Prostate gland (tissue), 2 donors: ENCODE measurements at regions of chr3 and their contacts with region 1.

Region 1: GRCh38 chr3:194583604-194584318 is 49.5 kb downstream of the TMEM44 start:
- DNase-seq: peak; percentile 88
- H3K4me3 ChIP-seq: peak overlapping the region; percentile 54 to 86
- H3K27ac ChIP-seq: peak overlapping the region; percentile 84 to 91
- H3K4me1 ChIP-seq: no peaks in the 10 kb centered on the region
- H3K27me3 ChIP-seq: no peaks in the 10 kb centered on the region
- CTCF ChIP-seq: peak in 2 of 4 experiments; percentile 25 to 37
- POLR2A ChIP-seq: peak; percentile 89

Region 2: GRCh38 chr3:194486540-194487288 is 97.0 kb before region 1 on chr3 and contains the start of gene ATP13A3:
- intact Hi-C with region 1: loop called (anchors 2 kb)
- DNase-seq: peak; percentile 91
- H3K4me3 ChIP-seq: peak within 1 kb of the TSS; percentile 49 to 68
- H3K27ac ChIP-seq: peak within 1 kb of the TSS; percentile 75 to 81
- H3K4me1 ChIP-seq: no peaks in the 10 kb centered on the region
- H3K27me3 ChIP-seq: no peaks in the 10 kb centered on the region
- CTCF ChIP-seq: no peak
- POLR2A ChIP-seq: peak; percentile 87
- total RNA-seq, gene ATP13A3: 75.4 to 80.4 TPM

Region 3: DNA sequence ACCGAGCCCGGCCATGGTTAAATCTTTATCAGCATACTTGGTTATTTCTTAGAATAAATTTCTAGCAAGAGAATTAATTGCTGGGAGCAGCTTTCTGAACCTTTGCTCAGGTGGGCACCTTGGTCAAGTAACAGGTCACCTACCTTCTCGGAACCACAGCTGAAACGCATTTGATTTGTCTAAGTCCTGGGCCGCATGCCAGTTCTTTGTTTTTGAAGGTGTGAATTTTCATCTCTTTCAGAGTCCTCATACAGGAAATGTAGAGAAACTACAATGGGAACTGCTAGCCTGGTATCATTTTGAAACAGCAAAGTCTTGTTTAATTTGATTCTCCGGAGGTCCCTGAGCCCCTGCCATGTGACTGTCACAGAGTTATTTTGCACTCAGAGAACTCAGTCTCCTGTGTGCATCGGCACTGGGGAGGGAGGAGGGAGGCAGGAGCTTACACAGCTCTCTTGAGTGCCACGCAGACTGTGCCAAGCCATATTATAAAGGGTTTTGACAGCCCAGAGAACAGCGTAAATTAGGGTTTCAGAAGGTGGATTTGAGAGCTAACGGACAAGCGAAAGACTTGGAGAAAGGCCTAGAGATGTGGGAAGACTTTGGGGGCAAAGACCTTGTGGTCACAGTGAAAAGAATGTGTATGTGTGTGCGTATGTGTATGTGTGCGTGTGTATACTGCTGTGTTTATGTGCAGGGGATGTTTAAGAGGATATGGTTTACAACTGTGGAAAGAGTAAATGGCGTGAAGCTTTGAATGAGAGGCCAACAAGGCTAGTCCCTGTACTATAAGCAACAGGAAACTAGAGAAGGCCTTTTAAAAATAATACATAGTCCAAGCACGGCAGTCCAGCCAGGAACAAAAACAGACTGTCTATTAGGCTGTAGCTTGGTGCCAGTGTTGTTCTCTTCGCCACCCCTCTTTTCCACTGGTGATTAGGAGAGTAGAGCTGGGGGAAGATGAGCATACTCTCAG is 35.1 kb before region 1 on chr3:
- intact Hi-C with region 1: no loop called
- DNase-seq: no peak
- H3K4me3 ChIP-seq: no peak overlapping the region
- H3K27ac ChIP-seq: no peak overlapping the region
- H3K4me1 ChIP-seq: no peaks in the 10 kb centered on the region
- H3K27me3 ChIP-seq: no peaks in the 10 kb centered on the region
- CTCF ChIP-seq: no peak
- POLR2A ChIP-seq: no peak

Region 4: GRCh38 chr3:194797555-194798250 is 213.9 kb after region 1 on chr3:
- intact Hi-C with region 1: no loop called
- DNase-seq: no peak
- H3K4me3 ChIP-seq: no peak overlapping the region
- H3K27ac ChIP-seq: no peak overlapping the region
- H3K4me1 ChIP-seq: no peaks in the 10 kb centered on the region
- H3K27me3 ChIP-seq: no peaks in the 10 kb centered on the region
- CTCF ChIP-seq: no peak
- POLR2A ChIP-seq: no peak